HEK293 (cell line): ENCODE measurements at regions of chr3 and their contacts with region 1.

Region 1: GRCh38 chr3:46184469-46184868 is 23.6 kb downstream of the CCR1 start:
- H3K4me3 ChIP-seq: no peak overlapping the region
- H3K27ac ChIP-seq: no peak overlapping the region
- H3K4me1 ChIP-seq: no peaks in the 10 kb centered on the region
- CTCF ChIP-seq: no peak

Region 2: DNA sequence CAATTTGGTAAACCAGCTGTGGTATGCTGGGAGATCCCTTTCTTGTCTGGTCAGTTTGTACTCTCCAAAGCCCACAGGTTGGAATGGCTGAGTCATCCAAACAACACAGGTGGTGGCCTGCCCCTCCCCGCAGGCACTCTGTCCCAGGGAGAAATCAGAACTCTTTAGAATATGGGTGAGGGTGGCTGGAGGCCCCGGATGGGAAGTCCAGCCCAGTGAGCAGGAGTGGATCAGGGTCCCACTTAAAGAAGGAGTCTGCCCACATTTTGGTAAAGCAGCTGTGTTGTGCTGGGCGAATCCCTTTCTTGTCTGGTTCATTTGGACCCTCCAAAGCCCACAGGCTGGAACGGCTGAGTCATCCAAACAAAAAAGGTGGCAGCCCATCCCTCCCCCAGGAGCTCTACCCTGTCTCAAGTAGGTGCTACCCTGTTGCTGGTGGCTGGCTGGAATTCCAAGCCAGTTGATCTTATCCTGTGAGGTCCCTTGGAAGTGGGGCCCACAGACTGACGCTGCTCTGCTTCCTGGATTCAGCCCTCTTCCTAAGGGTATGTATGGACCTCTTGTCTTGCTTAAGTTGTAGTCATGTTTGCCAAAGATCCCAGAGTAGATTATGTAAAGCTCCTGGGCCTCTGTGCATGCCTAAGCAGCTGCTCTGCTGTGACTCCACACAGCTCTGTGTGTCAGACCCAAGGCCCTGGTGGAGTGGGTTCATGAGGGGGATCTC is 21.0 kb before region 1 on chr3:
- CTCF ChIA-PET with region 1: no interaction called
- POLR2A ChIA-PET with region 1: no interaction called
- H3K4me3 ChIP-seq: no peak overlapping the region
- H3K27ac ChIP-seq: no peak overlapping the region
- H3K4me1 ChIP-seq: no peaks in the 10 kb centered on the region
- CTCF ChIP-seq: no peak

Region 3: GRCh38 chr3:46359733-46360493 is 175.4 kb after region 1 on chr3:
- CTCF ChIA-PET with region 1: interaction called, 4 read pairs
- POLR2A ChIA-PET with region 1: interaction called, 10 read pairs
- H3K4me3 ChIP-seq: no peak overlapping the region
- H3K27ac ChIP-seq: no peak overlapping the region
- H3K4me1 ChIP-seq: no peaks in the 10 kb centered on the region
- CTCF ChIP-seq: no peak